ENCODE measurements at regions of chr13 and their contacts with region 1.

Region 1: DNA sequence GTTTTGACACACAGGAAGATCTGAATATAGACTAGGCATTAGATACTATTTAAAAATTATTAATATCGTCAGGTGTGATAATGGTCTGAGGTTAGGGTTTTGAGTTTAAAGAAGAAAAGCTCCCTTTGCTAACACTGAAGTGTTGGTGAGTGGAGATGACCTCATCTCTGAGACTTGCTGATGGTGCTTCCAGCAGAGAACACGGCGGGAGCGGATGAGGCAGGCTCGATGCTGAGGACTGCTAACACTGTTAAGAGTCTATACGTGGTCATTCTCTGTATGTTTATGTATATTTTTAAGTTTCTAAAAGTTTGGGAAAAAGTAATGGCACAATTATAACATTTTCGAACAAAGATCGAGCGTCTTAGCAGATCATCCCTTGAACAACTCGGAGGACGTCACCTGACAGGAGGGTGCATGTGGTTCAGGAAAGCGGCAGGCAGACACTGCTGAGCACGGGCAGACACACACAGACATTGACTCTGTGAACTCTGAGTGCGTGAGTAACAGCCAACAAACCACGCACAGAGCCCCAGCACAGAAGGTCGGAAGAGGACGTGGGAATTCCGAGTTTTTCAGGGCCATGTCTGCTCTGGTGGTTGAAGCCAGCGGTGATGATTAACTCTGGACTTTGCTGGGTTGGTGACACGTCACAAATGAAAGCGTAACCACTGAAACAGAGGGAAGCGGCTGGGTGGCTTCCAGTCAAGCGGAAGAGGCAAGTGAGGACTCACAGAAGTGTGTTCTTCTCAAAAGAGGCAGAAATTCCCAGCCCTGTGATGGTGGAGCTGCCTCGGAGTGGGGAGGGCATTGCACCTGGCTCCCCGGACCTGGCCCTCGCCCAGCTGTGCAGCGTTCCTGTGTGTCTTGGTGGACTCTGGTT is 91.9 kb upstream of the TEX29 start:
- DNase-seq: no peak
- ATAC-seq: no peak

Region 2: DNA sequence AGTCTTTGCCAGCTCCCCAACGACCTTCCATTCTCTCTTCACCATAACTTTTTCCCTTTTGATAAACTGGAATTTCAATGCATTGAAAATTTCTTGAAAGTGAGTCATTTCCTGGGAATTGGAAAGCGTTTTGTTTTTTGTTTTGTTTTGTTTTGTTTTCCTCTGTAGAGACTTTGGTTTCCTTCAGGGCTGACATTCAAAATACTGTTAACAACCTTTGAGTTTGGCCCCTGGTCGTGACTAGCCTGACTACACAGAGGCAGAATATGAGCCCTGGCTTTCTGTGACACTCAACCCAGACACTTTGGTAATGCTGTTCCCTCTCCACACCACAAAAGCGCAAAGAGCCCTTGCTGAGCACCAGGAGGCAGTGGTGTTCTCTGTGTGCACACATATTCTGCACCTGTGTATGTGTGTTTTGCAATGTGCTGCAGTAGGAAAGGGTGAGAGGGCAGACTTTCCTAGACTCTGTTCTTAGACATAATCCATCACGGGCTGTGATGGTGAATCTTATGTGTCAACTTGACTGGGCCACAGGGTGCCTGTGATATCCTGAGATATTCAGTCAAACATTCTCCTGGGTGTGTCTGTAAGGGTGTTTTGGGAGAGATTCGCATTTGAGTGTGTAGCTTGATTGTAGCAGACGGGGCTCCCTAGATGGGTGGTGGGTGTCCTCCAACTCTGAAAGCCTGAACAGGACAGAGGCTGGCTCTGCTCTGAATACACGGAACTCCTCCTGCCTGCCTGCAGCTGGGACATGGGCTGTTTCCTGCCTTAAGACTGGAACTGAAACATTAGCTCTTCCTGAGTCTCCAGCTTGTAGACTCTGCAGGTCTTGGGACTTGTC is 284.2 kb before region 1 on chr13:
- intact Hi-C with region 1: no loop called
- DNase-seq: no peak
- ATAC-seq: peak; percentile 92

Region 3: DNA sequence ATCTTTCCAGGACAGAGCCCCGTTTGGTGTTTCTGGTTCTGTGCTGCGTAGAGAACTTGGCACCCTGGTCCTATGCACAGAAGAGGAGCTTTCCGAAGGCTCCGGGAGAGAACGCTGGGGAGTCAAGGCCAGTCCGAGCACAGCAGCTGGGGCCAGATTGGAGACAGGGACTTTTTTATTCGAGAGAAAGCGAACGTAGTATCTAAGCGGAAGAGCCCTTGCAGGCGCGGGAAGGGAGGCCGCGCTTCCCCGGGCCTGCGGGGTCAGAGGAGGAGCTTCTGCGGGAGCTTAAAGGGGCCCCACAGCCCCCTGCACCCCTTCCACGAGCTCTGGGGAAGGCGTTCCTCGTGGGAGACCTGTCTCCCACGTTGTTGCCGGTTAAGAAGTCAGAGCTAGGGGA is 162.0 kb before region 1 on chr13:
- intact Hi-C with region 1: loop called in 1 of 2 experiments (anchors 10 kb)
- DNase-seq: no peak
- ATAC-seq: peak; percentile 38